Activated T-helper 1 cell treated with anti-CD3 and anti-CD28 coated beads, Interleukin-12 subunit alpha, Interleukin-12 subunit beta, Interleukin-2, Interleukin-4 antibody, amounts not matched to agents 30 ng/mL and 10 ng/mL and 1 ng/mL, durations not matched to agents 14 hours and 24 hours and 36 hours (primary cell): ENCODE measurements at regions of chr5 and their contacts with region 1.

Region 1: GRCh38 chr5:56026863-56027300 is 32.1 kb upstream of the IL6ST start:
- DNase-seq: no peak
- H3K4me3 Mint-ChIP-seq: no peak overlapping the region
- H3K27ac Mint-ChIP-seq: no peak overlapping the region
- H3K4me1 Mint-ChIP-seq: peaks cover 23% of the 10 kb centered on the region
- H3K27me3 Mint-ChIP-seq: peaks cover 32% of the 10 kb centered on the region

Region 2: DNA sequence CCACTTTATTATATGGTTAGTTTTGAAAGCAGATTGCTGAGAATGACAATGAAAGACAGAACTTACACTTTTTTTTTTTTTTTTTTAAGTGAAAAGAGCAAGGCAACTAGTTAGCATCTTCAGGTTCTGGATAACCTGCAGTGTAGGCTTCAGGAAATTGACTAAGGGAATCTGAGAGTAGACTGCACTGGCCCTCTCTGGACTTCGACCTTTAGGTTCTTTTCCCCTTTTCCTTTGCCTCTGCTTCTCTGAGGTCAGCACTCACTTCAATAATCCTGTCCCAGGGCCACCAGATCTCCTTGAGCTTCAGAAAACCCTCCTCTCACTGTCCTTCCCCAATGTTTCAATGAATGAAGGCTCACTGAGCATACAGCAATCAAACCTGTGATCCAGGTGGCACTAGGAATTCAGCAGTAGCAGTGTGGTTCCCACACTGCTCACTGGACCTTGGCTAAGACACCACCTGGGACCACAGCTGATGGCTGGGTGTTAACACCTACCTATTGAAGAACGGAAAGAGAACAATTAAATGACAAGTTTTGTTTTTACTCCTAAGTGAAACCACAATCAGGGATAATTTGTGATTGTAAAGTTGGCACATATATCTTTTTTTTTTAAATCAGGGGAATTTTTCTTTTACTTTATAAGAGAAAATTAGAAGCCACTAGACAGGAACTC is 53.6 kb after region 1 on chr5:
- intact Hi-C with region 1: loop called (anchors 2 kb)
- DNase-seq: no peak
- H3K4me3 Mint-ChIP-seq: peak overlapping the region; percentile 38
- H3K27ac Mint-ChIP-seq: peak overlapping the region; percentile 37
- H3K4me1 Mint-ChIP-seq: peaks cover 45% of the 10 kb centered on the region
- H3K27me3 Mint-ChIP-seq: no peaks in the 10 kb centered on the region